ENCODE measurements at regions of chr10 and their contacts with region 1.

Region 1: DNA sequence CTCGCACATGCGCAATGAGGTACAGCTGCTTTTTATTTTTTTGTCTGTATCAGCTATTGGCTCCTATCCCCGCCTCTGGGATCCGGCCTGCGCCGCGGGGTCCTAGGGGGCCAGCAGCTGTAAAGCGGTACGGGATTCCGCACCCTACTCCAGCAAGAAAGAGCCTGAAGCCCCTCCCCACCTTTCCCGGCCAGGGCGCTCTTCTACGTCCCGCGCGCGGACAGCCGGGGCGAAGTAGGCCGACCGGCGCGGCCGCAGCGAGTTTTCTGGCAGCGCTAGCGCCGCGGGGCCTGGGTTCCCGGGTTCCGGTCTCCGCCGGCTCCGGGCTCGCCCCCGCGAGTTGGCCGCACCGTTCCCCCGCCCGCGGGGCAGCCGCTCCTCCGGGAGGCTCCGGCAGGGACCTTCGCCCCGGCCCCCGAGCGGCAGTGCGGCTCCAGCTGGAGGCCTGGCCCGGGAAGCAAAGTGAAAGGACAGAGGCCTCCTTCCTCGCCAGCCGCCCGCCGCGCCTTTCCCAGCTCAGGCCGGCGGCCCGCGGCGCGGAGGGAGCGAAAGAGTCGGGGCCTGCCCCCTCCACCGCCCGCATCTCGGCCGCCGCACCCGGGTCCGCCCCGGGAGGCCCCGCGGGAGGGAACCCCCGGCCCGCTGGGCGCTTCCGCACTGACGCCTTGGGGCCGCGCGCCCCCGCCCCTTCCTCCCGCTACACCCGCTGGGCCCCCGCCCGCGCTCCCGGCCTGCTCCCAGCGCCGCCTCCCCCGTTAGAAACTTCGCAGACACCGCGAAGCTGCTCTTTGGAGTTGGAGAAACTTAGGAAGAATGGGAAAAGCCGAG is 4.7 kb upstream of the SPAG6 start:
- DNase-seq: peak in 1 of 2 donors; percentile 84
- H3K4me3 ChIP-seq: peak overlapping the region; percentile 85 to 99
- H3K27ac ChIP-seq: peak overlapping the region; percentile 94 to 99
- H3K4me1 ChIP-seq: peaks cover 3 to 21% of the 10 kb centered on the region in 2 donors
- H3K27me3 ChIP-seq: peaks cover 62% of the 10 kb centered on the region
- CTCF ChIP-seq: no peak

Region 2: GRCh38 chr10:21533467-21534279 is 806.9 kb before region 1 on chr10 and contains the start of gene MLLT10:
- intact Hi-C with region 1: loop called (anchors 5 kb)
- DNase-seq: peak; percentile 82 to 96
- H3K4me3 ChIP-seq: peak within 1 kb of the TSS; percentile 81 to 93
- H3K27ac ChIP-seq: peak within 1 kb of the TSS; percentile 89 to 94
- H3K4me1 ChIP-seq: peaks cover 0 to 10% of the 10 kb centered on the region in 2 donors
- H3K27me3 ChIP-seq: no peaks in the 10 kb centered on the region
- CTCF ChIP-seq: peak; percentile 37 to 48 (median 42)
- total RNA-seq, gene MLLT10: 16.3 TPM

Region 3: DNA sequence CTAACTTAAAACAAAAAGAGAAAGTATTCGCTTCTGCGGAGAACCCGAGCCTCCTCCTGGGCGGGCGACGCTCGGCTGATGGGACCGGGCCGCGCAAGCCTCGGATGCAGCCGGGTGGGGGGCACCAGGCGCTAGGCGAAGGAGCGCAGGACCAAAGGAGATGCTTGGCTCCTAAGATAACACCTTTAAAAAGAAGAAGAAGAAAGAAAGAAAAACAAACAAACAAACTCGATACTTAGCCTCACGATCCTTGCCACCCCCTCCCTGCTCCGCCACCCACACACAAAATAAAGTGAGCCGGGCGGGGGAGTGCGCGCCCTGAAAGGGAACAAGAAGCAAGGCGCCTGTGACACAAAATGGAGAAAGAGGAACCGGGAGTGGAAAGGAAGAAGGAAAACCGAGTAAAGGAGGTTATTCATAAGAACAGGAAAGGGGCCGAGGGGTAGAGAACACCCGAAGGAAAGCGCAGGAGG is 88.8 kb before region 1 on chr10:
- intact Hi-C with region 1: loop called (anchors 2 kb)
- DNase-seq: peak in 1 of 2 donors; percentile 81
- H3K4me3 ChIP-seq: peak overlapping the region; percentile 81 to 93
- H3K27ac ChIP-seq: peak overlapping the region; percentile 98
- H3K4me1 ChIP-seq: no peaks in the 10 kb centered on the region
- H3K27me3 ChIP-seq: no peaks in the 10 kb centered on the region
- CTCF ChIP-seq: no peak

Region 4: GRCh38 chr10:22550732-22551131 is 210.2 kb after region 1 on chr10:
- intact Hi-C with region 1: loop called (anchors 10 kb)
- DNase-seq: peak in 1 of 2 donors; percentile 67
- H3K4me3 ChIP-seq: no peak overlapping the region
- H3K27ac ChIP-seq: no peak overlapping the region
- H3K4me1 ChIP-seq: no peaks in the 10 kb centered on the region
- H3K27me3 ChIP-seq: no peaks in the 10 kb centered on the region
- CTCF ChIP-seq: peak in 2 of 3 experiments; percentile 46 to 59

Region 5: DNA sequence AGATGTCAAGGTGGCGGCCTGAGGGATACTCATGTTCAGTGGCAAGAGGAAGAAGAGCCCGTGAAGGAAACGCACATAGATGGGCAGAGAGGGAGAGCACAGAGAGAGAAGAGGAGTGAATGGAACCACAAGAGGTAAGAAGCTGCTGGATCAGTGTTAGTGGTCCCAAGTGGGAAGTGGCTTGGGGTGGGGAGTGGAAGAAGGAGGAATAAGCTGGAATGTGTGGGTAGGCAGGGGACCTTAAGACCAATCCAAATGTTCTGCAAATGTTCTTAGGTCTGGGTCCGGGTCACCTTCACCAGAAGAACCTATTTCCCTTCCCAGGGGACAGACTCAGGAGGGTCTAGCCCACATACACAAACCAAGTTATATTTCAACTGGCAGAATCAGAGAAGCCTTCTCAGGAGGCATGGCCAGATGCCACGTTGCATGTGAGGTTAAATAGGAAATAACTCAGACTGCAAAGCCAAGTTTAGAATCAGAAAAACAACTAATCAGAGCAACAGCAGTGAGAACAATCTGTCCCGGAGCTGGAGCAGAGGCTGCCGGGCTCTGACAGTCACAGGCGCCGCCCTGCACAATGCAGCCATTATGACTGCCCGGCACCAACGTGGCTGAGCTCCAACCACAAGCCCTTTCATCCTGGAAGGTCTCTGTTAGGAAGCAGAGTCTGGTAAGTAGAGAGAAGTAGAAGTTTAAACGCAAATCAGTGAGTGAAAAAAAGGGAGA is 508.7 kb after region 1 on chr10:
- intact Hi-C with region 1: loop called (anchors 10 kb)
- DNase-seq: peak; percentile 70 to 93
- H3K4me3 ChIP-seq: peak overlapping the region; percentile 25 to 38
- H3K27ac ChIP-seq: peak overlapping the region; percentile 87 to 96
- H3K4me1 ChIP-seq: peaks cover 3 to 34% of the 10 kb centered on the region in 2 donors
- H3K27me3 ChIP-seq: no peaks in the 10 kb centered on the region
- CTCF ChIP-seq: no peak